GM10248 (cell line): ENCODE measurements at regions of chr1 and their contacts with region 1.

Region 1: GRCh38 chr1:3618881-3619671 is 5.7 kb upstream of the TPRG1L start:
- DNase-seq: peak; percentile 81
- CTCF ChIP-seq: peak; percentile 82

Region 2: DNA sequence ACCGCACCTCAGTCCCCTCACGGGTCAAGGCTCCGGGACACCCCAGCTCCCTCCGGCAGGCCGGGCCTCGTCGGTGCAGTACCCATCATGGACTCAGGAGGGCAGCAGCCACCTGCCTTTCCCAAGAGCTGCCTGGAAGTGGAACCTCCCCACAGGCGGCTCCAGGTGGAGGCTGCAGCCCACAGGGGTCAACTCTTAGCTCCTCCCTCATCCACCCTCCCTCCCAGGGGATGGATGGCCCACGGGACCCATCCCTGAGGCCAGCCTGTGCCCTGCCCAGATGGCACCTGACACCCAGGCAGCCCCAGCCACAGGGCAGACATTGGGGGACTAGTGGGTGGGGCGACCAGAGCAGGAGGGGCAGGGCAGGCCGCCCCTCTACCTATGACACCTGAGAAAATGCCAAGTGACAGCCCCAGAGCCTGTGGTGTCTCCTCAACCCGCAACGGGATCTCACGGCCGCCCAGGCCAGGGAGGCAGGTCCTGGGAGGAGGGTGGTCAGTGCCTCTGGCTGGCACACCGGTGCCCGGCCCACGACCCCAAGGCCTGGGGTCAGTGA is 165.8 kb before region 1 on chr1:
- CTCF ChIA-PET with region 1: interaction called, 41 read pairs
- POLR2A ChIA-PET with region 1: interaction called, 3 read pairs
- DNase-seq: peak; percentile 90
- CTCF ChIP-seq: peak; percentile 92

Region 3: GRCh38 chr1:3491291-3492246 is 127.5 kb before region 1 on chr1:
- CTCF ChIA-PET with region 1: interaction called, 32 read pairs
- POLR2A ChIA-PET with region 1: no interaction called
- DNase-seq: peak; percentile 92
- CTCF ChIP-seq: peak; percentile 92

Region 4: GRCh38 chr1:3564921-3565827 is 53.9 kb before region 1 on chr1:
- CTCF ChIA-PET with region 1: interaction called, 71 read pairs
- POLR2A ChIA-PET with region 1: no interaction called
- DNase-seq: peak; percentile 82
- CTCF ChIP-seq: peak; percentile 93

Region 5: GRCh38 chr1:3631330-3632262 is 12.5 kb after region 1 on chr1:
- CTCF ChIA-PET with region 1: interaction called, 55 read pairs
- POLR2A ChIA-PET with region 1: no interaction called
- DNase-seq: no peak
- CTCF ChIP-seq: no peak

Region 6: DNA sequence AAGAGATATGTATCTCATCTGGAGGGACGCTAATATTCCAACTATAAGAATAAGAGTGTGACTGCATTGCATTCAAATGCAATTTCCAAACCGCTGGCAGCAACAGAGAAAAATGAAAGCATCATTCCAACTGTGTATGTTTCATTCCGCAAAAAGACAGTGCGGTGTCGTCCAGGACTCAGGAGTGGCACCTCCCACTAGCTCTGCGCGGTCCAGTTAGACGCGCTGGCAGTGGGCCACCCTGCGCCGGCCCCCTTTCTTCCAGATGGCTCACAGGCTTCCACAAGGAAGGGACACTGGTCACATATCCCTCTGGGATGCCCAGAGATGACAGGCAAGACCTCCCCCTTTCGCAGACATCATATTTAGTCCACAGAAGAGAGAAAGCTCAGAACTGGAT is 18.9 kb after region 1 on chr1:
- CTCF ChIA-PET with region 1: interaction called, 55 read pairs
- POLR2A ChIA-PET with region 1: no interaction called
- DNase-seq: no peak
- CTCF ChIP-seq: no peak

Region 7: GRCh38 chr1:3702990-3703728 is 84.1 kb after region 1 on chr1:
- CTCF ChIA-PET with region 1: no interaction called
- POLR2A ChIA-PET with region 1: no interaction called
- DNase-seq: no peak
- CTCF ChIP-seq: no peak

Region 8: DNA sequence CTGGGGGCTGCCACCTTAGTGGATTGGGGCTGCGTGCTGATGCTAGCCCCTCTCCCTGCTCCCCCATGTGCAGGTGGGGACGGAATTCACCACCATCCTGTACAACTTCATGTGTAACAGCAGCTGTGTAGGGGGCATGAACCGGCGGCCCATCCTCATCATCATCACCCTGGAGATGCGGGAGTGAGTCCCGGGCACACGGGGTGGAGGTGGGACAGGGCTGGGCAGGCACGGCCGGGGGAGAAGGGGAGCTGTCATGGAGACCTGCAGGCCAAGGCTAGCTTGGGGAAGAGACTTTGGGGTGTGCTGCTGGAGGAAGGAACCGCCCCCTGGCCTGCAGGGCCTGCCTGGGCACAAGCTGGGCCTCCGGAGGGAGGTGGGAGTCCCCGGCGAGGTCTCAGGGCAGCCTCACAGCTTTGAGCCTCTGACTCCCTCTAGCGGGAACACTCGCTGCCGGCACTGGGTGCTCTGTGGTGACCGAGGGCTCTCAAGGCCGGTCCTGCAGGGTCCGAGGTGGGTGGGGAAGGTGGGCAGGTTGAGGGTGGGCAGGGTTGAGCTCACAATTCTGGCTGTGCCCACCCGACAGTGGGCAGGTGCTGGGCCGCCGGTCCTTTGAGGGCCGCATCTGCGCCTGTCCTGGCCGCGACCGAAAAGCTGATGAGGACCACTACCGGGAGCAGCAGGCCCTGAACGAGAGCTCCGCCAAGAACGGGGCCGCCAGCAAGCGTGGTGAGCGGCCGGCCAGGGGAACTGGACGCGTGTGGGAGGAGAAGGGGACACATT is 108.2 kb after region 1 on chr1:
- CTCF ChIA-PET with region 1: interaction called, 17 read pairs
- POLR2A ChIA-PET with region 1: no interaction called
- DNase-seq: peak; percentile 80
- CTCF ChIP-seq: peak; percentile 51